ENCODE measurements at regions of chr19 and their contacts with region 1.

Region 1: DNA sequence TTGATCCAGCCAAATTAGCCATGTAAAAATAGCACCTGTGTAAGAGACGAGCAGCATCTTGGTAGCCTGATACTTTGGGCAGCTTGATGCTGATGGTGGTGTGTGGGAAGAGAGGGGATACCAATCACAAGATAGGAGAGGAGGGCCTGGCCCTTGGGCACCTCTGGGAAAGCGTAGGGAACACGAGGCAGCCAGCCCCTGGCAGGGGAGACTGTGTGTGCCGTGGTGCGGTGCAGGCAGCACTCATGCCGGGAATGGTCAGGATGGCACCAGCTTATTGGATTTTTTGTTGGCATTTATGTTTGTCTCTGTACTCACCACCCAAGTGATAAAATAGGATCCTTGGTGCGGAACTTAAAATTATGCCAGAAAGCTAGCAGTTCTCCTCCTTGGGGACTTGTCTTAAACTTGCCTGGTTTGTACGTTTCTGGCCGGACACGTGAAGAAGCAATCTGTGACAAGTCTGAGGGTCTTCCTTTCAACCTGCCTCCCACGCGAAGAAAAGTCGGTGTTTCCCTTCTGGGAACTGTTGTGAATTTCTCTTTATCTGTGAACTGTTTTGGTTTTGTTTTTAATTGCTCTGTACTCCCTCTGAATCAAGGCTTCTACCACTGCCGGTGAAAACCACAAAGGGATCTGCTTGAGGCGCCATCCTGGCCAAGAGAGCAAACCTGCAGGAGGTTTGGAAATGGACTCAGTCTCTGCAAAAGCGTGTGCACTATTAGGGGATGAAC is 10.1 kb downstream of the SIGLEC8 start:
- DNase-seq: peak; percentile 39
- H3K4me3 Mint-ChIP-seq: peak overlapping the region; percentile 37
- H3K27ac Mint-ChIP-seq: peak overlapping the region; percentile 73
- H3K4me1 Mint-ChIP-seq: peaks cover 53% of the 10 kb centered on the region
- H3K27me3 Mint-ChIP-seq: no peaks in the 10 kb centered on the region

Region 2: DNA sequence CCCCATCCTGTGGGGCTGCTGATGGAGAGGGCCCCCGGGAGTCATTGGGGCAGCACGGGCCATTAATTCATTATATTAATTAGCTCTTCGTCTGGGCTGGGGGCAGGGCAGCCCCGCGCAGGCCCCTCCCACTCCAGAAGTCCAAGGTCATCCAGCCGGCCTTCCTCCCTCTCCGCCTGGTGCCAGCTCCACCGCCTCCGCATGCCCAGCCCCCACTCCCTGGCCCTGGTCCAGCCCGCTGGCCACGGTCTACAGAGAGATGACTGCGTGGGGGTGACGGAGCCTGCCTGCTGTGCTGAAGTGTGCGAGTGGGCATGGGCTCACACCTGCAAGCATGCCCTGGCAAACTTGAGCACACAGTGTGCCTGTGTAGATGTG is 127.9 kb before region 1 on chr19:
- intact Hi-C with region 1: no loop called
- DNase-seq: no peak
- H3K4me3 Mint-ChIP-seq: no peak overlapping the region
- H3K27ac Mint-ChIP-seq: no peak overlapping the region
- H3K4me1 Mint-ChIP-seq: peaks cover 6% of the 10 kb centered on the region
- H3K27me3 Mint-ChIP-seq: peaks cover 21% of the 10 kb centered on the region

Region 3: DNA sequence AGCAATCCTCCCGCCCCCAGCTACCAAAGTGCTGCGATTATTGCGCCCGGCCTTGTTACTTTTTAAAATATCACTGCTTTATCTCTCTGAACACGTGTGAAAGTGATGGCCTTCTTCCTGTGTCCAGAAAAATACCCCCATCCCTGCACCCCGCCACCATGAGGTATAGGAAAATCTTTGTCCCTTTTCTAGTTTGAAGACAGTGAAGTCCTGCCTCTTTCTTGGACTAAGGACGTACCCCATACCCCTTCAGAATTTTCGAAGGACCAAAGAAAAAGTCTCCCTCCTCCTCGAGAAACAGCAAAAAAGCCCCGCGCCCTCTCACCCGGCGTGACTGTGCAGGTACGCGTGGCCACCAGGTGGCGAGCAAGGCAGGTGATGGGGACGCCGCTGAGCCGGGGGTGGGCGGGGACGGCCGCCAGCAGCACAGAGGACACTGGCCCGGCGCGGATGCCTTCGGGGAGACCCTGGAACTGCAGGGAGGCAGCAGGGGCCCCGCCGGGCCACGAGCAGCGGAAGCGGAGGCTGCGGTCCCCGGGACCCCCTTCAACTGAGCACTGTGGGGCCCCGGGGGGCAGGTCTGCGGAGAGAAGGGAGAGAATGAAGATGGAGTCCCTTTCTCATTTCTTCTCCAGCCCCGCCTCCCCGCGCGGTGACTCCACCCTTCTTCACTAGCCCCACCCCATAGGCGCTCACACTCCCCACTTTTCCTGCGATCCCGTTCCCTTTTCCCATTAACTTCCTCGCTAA is 109.4 kb before region 1 on chr19:
- intact Hi-C with region 1: no loop called
- DNase-seq: peak; percentile 83
- H3K4me3 Mint-ChIP-seq: peak overlapping the region; percentile 95
- H3K27ac Mint-ChIP-seq: peak overlapping the region; percentile 89
- H3K4me1 Mint-ChIP-seq: peaks cover 23% of the 10 kb centered on the region
- H3K27me3 Mint-ChIP-seq: peaks cover 2% of the 10 kb centered on the region

Region 4: GRCh38 chr19:51467864-51468544 is 19.8 kb after region 1 on chr19:
- intact Hi-C with region 1: loop called (anchors 1 kb)
- DNase-seq: no peak
- H3K4me3 Mint-ChIP-seq: peak overlapping the region; percentile 55
- H3K27ac Mint-ChIP-seq: peak overlapping the region; percentile 15
- H3K4me1 Mint-ChIP-seq: peaks cover 67% of the 10 kb centered on the region
- H3K27me3 Mint-ChIP-seq: no peaks in the 10 kb centered on the region